ENCODE measurements at regions of chr19 and their contacts with region 1.

Region 1: GRCh38 chr19:1064661-1065605 is 2.0 kb upstream of the ARHGAP45 start:
- DNase-seq: peak; percentile 60 to 82 (median 72)
- ATAC-seq: peak; percentile 47
- H3K4me3 ChIP-seq: peak overlapping the region; percentile 27
- H3K4me3 Mint-ChIP-seq: peak overlapping the region; percentile 59 to 99 (median 68)
- H3K27ac ChIP-seq: peak overlapping the region; percentile 99
- H3K27ac Mint-ChIP-seq: peak overlapping the region; percentile 40 to 92 (median 71)
- H3K4me1 ChIP-seq: peaks cover 32 to 38% of the 10 kb centered on the region in 2 donors
- H3K4me1 Mint-ChIP-seq: peaks cover 20 to 42% (median 33%) of the 10 kb centered on the region in 7 donors
- H3K27me3 ChIP-seq: no peaks in the 10 kb centered on the region
- H3K27me3 Mint-ChIP-seq: no peaks in the 10 kb centered on the region

Region 2: GRCh38 chr19:447816-448560 is 616.9 kb before region 1 on chr19:
- CTCF ChIA-PET with region 1: no interaction called
- POLR2A ChIA-PET with region 1: no interaction called
- intact Hi-C with region 1: no loop called
- DNase-seq: no peak
- ATAC-seq: no peak
- H3K4me3 ChIP-seq: no peak overlapping the region
- H3K4me3 Mint-ChIP-seq: no peak overlapping the region
- H3K27ac ChIP-seq: no peak overlapping the region
- H3K27ac Mint-ChIP-seq: peak overlapping the region in 1 of 9 donors; percentile 36
- H3K4me1 ChIP-seq: no peaks in the 10 kb centered on the region
- H3K4me1 Mint-ChIP-seq: no peaks in the 10 kb centered on the region
- H3K27me3 ChIP-seq: no peaks in the 10 kb centered on the region
- H3K27me3 Mint-ChIP-seq: no peaks in the 10 kb centered on the region

Region 3: GRCh38 chr19:872266-872951 is 192.5 kb before region 1 on chr19:
- CTCF ChIA-PET with region 1: no interaction called
- POLR2A ChIA-PET with region 1: no interaction called
- intact Hi-C with region 1: loop called in 1 of 2 experiments (anchors 2 kb)
- DNase-seq: peak; percentile 63 to 91 (median 80)
- ATAC-seq: peak; percentile 86
- H3K4me3 ChIP-seq: peak overlapping the region; percentile 37
- H3K4me3 Mint-ChIP-seq: peak overlapping the region; percentile 72 to 86 (median 82)
- H3K27ac ChIP-seq: peak overlapping the region; percentile 54
- H3K27ac Mint-ChIP-seq: peak overlapping the region; percentile 86 to 95 (median 92)
- H3K4me1 ChIP-seq: peaks cover 8 to 14% of the 10 kb centered on the region in 2 donors
- H3K4me1 Mint-ChIP-seq: peaks cover 0 to 27% (median 12%) of the 10 kb centered on the region in 7 donors
- H3K27me3 ChIP-seq: no peaks in the 10 kb centered on the region
- H3K27me3 Mint-ChIP-seq: peaks cover 0 to 2% (median 0%) of the 10 kb centered on the region in 5 donors

Region 4: GRCh38 chr19:1039646-1040475 is 25.1 kb before region 1 on chr19 and contains the start of gene ABCA7:
- CTCF ChIA-PET with region 1: interaction called, 3 read pairs
- POLR2A ChIA-PET with region 1: interaction called, 136 read pairs
- intact Hi-C with region 1: loop called (anchors 1 to 2 kb)
- DNase-seq: peak; percentile 98 to 100 (median 99)
- ATAC-seq: peak; percentile 96
- H3K4me3 ChIP-seq: peak within 1 kb of the TSS; percentile 74
- H3K4me3 Mint-ChIP-seq: peak within 1 kb of the TSS; percentile 95 to 100 (median 98)
- H3K27ac ChIP-seq: peak within 1 kb of the TSS; percentile 74
- H3K27ac Mint-ChIP-seq: peak within 1 kb of the TSS; percentile 79 to 98 (median 95)
- H3K4me1 ChIP-seq: peaks cover 30 to 42% of the 10 kb centered on the region in 2 donors
- H3K4me1 Mint-ChIP-seq: peaks cover 29 to 61% (median 54%) of the 10 kb centered on the region in 7 donors
- H3K27me3 ChIP-seq: no peaks in the 10 kb centered on the region
- H3K27me3 Mint-ChIP-seq: no peaks in the 10 kb centered on the region
- total RNA-seq, gene ABCA7: 57.8 to 323 (median 155) TPM

Region 5: GRCh38 chr19:1094975-1095701 is 30.2 kb after region 1 on chr19 and contains the start of gene POLR2E:
- CTCF ChIA-PET with region 1: interaction called, 10 read pairs
- POLR2A ChIA-PET with region 1: interaction called, 2,022 read pairs
- intact Hi-C with region 1: loop called in 1 of 2 experiments (anchors 5 kb)
- DNase-seq: peak; percentile 97 to 99 (median 99)
- ATAC-seq: peak; percentile 98
- H3K4me3 ChIP-seq: peak within 1 kb of the TSS; percentile 68
- H3K4me3 Mint-ChIP-seq: peak within 1 kb of the TSS; percentile 80 to 97 (median 92)
- H3K27ac ChIP-seq: peak within 1 kb of the TSS; percentile 71
- H3K27ac Mint-ChIP-seq: peak within 1 kb of the TSS; percentile 87 to 97 (median 93)
- H3K4me1 ChIP-seq: peaks cover 18 to 23% of the 10 kb centered on the region in 2 donors
- H3K4me1 Mint-ChIP-seq: peaks cover 10 to 59% (median 44%) of the 10 kb centered on the region in 7 donors
- H3K27me3 ChIP-seq: no peaks in the 10 kb centered on the region
- H3K27me3 Mint-ChIP-seq: no peaks in the 10 kb centered on the region
- total RNA-seq, gene POLR2E: 75.3 to 157 (median 82.1) TPM

Region 6: DNA sequence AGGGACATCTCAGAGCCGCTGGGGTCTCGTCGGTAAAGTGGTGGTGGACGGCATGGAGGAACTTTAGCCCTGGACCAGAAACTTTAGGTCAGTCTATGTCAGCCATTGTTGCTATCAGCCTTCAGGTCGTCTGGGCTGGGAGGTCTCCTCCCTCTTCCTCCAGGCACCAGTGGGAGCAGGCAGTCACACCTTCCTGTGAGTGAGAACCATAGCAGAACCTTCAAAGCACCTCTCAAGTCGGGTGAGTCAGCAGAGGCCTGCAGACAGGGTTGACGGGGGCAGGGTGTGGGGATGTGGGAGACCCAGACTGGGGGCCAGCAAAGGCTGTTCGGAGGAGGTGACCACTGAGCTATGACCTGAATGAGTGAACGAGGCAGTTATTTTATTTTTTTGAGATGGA is 124.5 kb after region 1 on chr19:
- CTCF ChIA-PET with region 1: interaction called, 3 read pairs
- POLR2A ChIA-PET with region 1: interaction called, 26 read pairs
- intact Hi-C with region 1: loop called (anchors 5 kb)
- DNase-seq: peak in 1 of 9 donors; percentile 67
- ATAC-seq: peak; percentile 57
- H3K4me3 ChIP-seq: no peak overlapping the region
- H3K4me3 Mint-ChIP-seq: peak overlapping the region in 5 of 10 donors; percentile 33 to 63 (median 58)
- H3K27ac ChIP-seq: no peak overlapping the region
- H3K27ac Mint-ChIP-seq: peak overlapping the region; percentile 44 to 94 (median 79)
- H3K4me1 ChIP-seq: peaks cover 21 to 25% of the 10 kb centered on the region in 2 donors
- H3K4me1 Mint-ChIP-seq: peaks cover 11 to 27% (median 18%) of the 10 kb centered on the region in 7 donors
- H3K27me3 ChIP-seq: no peaks in the 10 kb centered on the region
- H3K27me3 Mint-ChIP-seq: no peaks in the 10 kb centered on the region

Region 7: GRCh38 chr19:1258707-1259194 is 193.8 kb after region 1 on chr19:
- CTCF ChIA-PET with region 1: no interaction called
- POLR2A ChIA-PET with region 1: no interaction called
- intact Hi-C with region 1: no loop called
- DNase-seq: no peak
- ATAC-seq: no peak
- H3K4me3 ChIP-seq: peak overlapping the region; percentile 73
- H3K4me3 Mint-ChIP-seq: peak overlapping the region; percentile 82 to 90 (median 88)
- H3K27ac ChIP-seq: peak overlapping the region; percentile 99
- H3K27ac Mint-ChIP-seq: peak overlapping the region; percentile 92 to 98 (median 97)
- H3K4me1 ChIP-seq: peaks cover 59 to 66% of the 10 kb centered on the region in 2 donors
- H3K4me1 Mint-ChIP-seq: peaks cover 26 to 62% (median 55%) of the 10 kb centered on the region in 7 donors
- H3K27me3 ChIP-seq: no peaks in the 10 kb centered on the region
- H3K27me3 Mint-ChIP-seq: no peaks in the 10 kb centered on the region

Region 8: GRCh38 chr19:1269065-1269477 is 204.1 kb after region 1 on chr19 and contains the start of gene CIRBP:
- CTCF ChIA-PET with region 1: no interaction called
- POLR2A ChIA-PET with region 1: interaction called, 26 read pairs
- intact Hi-C with region 1: no loop called
- DNase-seq: peak; percentile 95 to 99 (median 98)
- ATAC-seq: peak; percentile 90
- H3K4me3 ChIP-seq: peak within 1 kb of the TSS; percentile 76
- H3K4me3 Mint-ChIP-seq: peak within 1 kb of the TSS; percentile 88 to 96 (median 90)
- H3K27ac ChIP-seq: peak within 1 kb of the TSS; percentile 82
- H3K27ac Mint-ChIP-seq: peak within 1 kb of the TSS; percentile 87 to 94 (median 91)
- H3K4me1 ChIP-seq: peaks cover 60 to 61% of the 10 kb centered on the region in 2 donors
- H3K4me1 Mint-ChIP-seq: peaks cover 52 to 76% (median 62%) of the 10 kb centered on the region in 7 donors
- H3K27me3 ChIP-seq: no peaks in the 10 kb centered on the region
- H3K27me3 Mint-ChIP-seq: peaks cover 0 to 6% (median 0%) of the 10 kb centered on the region in 5 donors
- total RNA-seq, gene CIRBP: 237 to 629 (median 524) TPM

Region 9: DNA sequence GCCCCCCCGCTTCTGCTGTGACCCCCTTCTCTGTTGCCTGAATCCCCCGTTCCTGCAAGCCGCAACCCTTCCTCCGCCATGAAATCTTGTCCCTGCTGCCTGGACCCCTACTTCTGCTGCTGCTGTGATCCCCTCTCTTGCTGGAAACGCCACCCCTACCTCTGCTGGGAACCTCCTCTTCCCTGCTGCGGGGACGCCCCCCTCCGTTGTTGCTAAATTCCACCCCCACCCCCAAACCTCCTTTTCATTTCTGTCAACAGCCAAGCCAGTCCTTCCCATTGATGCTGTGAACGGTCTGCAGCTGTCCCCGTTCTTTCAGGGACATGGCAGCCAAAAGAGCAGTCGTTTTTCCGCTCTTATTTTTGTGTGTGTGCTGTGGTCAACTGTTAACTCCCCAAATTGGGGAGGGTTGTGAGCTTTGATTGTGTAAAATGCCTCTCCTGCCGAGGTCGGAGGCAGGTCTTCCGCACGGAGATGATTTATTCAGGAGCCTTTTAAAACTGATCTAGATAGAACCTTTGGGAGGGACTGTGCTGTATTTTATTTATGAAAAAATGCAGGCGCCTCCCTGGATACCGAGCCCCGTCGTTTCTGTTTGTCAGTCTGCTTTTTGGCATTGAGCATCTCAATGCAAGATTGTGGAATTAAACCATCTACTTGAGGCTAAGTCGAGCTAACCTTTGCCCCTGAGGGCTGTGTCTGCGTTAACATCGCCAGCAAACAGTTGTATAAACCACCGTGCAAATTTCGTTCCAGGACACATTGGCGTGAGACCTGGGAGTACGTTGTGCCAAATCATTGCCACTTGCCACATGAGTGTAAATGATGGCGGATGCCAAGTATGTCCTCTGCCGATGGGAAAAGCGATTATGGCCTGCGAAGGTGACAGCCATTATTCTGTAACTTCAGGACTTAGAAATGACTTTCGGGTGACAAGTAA is 290.9 kb after region 1 on chr19:
- CTCF ChIA-PET with region 1: no interaction called
- POLR2A ChIA-PET with region 1: no interaction called
- intact Hi-C with region 1: no loop called
- DNase-seq: no peak
- ATAC-seq: no peak
- H3K4me3 ChIP-seq: peak overlapping the region; percentile 60
- H3K4me3 Mint-ChIP-seq: peak overlapping the region; percentile 74 to 98 (median 90)
- H3K27ac ChIP-seq: peak overlapping the region; percentile 59
- H3K27ac Mint-ChIP-seq: peak overlapping the region in 8 of 9 donors; percentile 50 to 86 (median 78)
- H3K4me1 ChIP-seq: peaks cover 5 to 6% of the 10 kb centered on the region in 2 donors
- H3K4me1 Mint-ChIP-seq: peaks cover 9 to 24% (median 18%) of the 10 kb centered on the region in 7 donors
- H3K27me3 ChIP-seq: no peaks in the 10 kb centered on the region
- H3K27me3 Mint-ChIP-seq: no peaks in the 10 kb centered on the region

Measured in naive thymus-derived CD4-positive, alpha-beta T cell (primary cell).